Mammary epithelial cell (primary cell): ENCODE measurements at regions of chr11 and their contacts with region 1.

Region 1: GRCh38 chr11:17384002-17384511 is 4.4 kb downstream of the KCNJ11 start:
- DNase-seq: peak; percentile 47
- H3K4me3 ChIP-seq: no peak overlapping the region
- H3K27ac ChIP-seq: no peak overlapping the region
- H3K4me1 ChIP-seq: peaks cover 5% of the 10 kb centered on the region
- H3K27me3 ChIP-seq: no peaks in the 10 kb centered on the region
- CTCF ChIP-seq: peak; percentile 73 to 88

Region 2: DNA sequence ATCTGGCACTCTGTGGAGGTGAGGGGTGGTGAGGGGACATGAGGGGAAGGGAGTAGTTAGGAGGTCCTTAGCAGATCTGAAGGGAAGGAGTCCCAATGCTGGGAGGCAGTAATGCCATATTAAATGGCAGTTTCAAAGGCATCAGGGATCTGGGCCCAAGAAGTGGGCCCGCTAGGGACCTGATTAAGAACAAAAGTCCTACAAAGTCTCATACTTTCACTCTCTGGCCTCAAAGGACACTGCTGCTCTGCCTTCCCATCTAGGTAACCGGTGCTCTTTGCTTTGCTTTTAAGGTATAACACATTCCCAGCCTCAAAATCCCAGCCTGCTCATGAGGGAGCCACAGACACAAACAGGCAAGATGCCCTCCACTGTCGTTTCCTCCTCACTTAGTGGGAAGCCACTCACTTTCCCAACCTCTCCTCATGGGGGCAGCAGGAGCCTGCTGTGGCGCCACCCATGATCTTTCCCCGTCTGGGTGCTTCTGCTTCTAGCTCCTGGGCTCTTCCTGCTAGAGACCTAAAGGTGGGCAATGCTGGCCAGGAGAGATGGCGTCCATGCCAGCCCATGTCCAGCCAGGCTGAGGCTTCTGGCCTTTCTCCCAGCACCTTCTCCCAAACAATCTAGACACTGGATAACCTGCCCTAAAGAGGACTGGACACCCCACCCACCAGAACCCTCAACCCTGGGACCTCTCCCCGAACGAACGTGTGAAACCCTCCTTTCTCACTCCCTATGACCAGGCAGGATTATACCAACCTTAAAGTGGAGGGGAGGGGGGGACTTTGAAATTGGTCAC is 438.2 kb before region 1 on chr11:
- CTCF ChIA-PET with region 1: no interaction called
- dilution Hi-C with region 1: no loop called
- in situ Hi-C with region 1: no loop called
- intact Hi-C with region 1: loop called (anchors 10 kb)
- DNase-seq: peak; percentile 65
- H3K4me3 ChIP-seq: no peak overlapping the region
- H3K27ac ChIP-seq: no peak overlapping the region
- H3K4me1 ChIP-seq: peaks cover 7% of the 10 kb centered on the region
- H3K27me3 ChIP-seq: no peaks in the 10 kb centered on the region
- CTCF ChIP-seq: peak; percentile 75 to 93

Region 3: DNA sequence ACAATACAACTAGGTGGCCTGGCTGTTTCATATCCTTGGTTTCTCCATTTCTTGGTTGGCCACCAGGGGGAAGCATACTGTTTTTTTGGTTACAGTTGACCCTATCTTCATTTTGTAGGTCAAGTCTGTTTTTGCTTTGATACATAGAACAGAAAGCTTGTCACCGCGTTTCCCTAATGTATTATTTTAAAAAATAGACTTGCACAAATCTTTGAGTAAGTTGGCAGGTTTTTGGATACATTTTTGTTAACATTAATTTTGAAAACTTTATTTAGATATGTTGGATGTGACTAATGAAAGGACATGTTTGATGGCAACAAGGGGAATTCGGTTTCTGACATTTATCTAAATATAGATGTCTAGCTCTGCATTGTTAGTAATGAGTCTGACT is 29.5 kb before region 1 on chr11:
- CTCF ChIA-PET with region 1: no interaction called
- dilution Hi-C with region 1: no loop called
- in situ Hi-C with region 1: no loop called
- intact Hi-C with region 1: loop called (anchors 2 kb)
- DNase-seq: peak; percentile 57
- H3K4me3 ChIP-seq: peak overlapping the region in 1 of 3 experiments; percentile 43
- H3K27ac ChIP-seq: no peak overlapping the region
- H3K4me1 ChIP-seq: peaks cover 20% of the 10 kb centered on the region
- H3K27me3 ChIP-seq: no peaks in the 10 kb centered on the region
- CTCF ChIP-seq: peak; percentile 65 to 69

Region 4: DNA sequence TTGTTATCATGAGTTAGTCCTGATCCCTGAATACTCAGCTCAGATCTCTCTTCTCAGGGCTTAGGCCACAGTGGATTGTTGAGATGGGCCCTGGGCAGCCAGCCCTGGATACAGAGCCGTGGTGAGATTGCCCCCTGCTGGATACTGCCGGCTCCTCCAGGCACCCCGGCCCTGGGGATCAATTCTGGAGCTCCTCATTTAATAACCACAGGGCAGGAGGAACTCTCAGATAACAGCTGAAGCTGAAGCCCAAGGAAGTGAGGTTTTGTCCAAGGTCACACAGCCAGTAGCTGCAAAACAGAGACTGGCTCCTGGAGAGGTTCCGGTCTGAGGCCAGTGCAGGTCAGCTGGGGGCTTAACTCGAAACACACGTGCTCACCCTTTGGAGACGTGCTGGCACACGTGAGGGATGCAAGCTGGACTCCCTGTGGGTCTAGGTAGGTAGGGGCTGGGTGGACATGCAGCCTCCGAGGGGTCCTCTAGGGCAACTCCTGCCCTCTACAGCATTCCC is 144.2 kb after region 1 on chr11:
- CTCF ChIA-PET with region 1: interaction called, 12 read pairs
- dilution Hi-C with region 1: no loop called
- in situ Hi-C with region 1: no loop called
- intact Hi-C with region 1: loop called (anchors 1 kb)
- DNase-seq: peak; percentile 24
- H3K4me3 ChIP-seq: no peak overlapping the region
- H3K27ac ChIP-seq: no peak overlapping the region
- H3K4me1 ChIP-seq: no peaks in the 10 kb centered on the region
- H3K27me3 ChIP-seq: no peaks in the 10 kb centered on the region
- CTCF ChIP-seq: peak; percentile 69 to 84

Region 5: GRCh38 chr11:17978553-17979287 is 594.7 kb after region 1 on chr11:
- CTCF ChIA-PET with region 1: no interaction called
- dilution Hi-C with region 1: no loop called
- in situ Hi-C with region 1: no loop called
- intact Hi-C with region 1: loop called (anchors 10 kb)
- DNase-seq: peak; percentile 39
- H3K4me3 ChIP-seq: no peak overlapping the region
- H3K27ac ChIP-seq: no peak overlapping the region
- H3K4me1 ChIP-seq: no peaks in the 10 kb centered on the region
- H3K27me3 ChIP-seq: no peaks in the 10 kb centered on the region
- CTCF ChIP-seq: peak; percentile 82 to 89